ENCODE measurements at regions of chr1 and their contacts with region 1.

Region 1: GRCh38 chr1:160768295-160768657 is 27.7 kb upstream of the LY9 start:
- DNase-seq: peak; percentile 90
- H3K4me3 Mint-ChIP-seq: peak overlapping the region; percentile 70
- H3K27ac Mint-ChIP-seq: peak overlapping the region; percentile 86
- H3K4me1 Mint-ChIP-seq: peaks cover 26% of the 10 kb centered on the region
- H3K27me3 Mint-ChIP-seq: peaks cover 4% of the 10 kb centered on the region

Region 2: GRCh38 chr1:160675641-160676410 is 92.5 kb before region 1 on chr1:
- CTCF ChIA-PET with region 1: interaction called, 108 read pairs
- POLR2A ChIA-PET with region 1: interaction called, 13 read pairs
- DNase-seq: peak; percentile 82
- H3K4me3 Mint-ChIP-seq: peak overlapping the region; percentile 53
- H3K27ac Mint-ChIP-seq: peak overlapping the region; percentile 61
- H3K4me1 Mint-ChIP-seq: peaks cover 33% of the 10 kb centered on the region
- H3K27me3 Mint-ChIP-seq: no peaks in the 10 kb centered on the region

Region 3: DNA sequence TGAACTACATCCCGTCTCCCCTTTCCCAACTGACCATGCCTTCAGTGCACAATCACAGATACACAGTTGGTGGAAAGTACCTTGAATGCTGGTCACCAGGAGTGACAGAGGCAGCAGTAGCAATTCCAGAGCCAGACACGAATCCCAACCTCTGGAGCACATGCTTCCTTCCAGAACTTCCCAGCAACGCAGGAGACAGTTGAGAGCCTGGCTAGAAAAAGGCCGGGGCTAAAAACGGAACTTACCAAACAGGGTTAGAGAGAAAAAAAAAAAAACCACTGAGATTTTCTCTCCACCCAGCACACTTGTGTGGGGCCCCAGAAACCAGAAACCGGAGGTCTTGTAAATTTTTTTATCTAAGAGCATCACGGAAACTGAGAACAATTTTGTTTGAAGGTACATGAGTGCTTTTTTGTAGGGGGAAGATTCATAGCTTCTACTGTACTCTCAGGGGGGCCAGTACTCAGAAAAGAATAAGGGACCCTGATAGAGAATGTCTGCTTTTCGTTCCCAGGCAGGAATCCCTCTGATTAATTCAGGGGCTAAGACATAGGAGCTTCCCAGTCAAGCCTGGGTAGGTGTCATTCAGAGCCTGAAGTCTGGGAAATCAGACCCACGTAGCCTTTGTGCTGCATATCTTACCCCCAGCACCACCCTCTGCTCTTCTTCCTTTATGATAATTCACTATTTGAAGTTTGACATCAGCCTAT is 56.5 kb before region 1 on chr1 and contains the start of gene CD48:
- CTCF ChIA-PET with region 1: interaction called, 24 read pairs
- POLR2A ChIA-PET with region 1: interaction called, 16 read pairs
- DNase-seq: peak; percentile 61
- H3K4me3 Mint-ChIP-seq: no peak within 1 kb of the TSS
- H3K27ac Mint-ChIP-seq: no peak within 1 kb of the TSS
- H3K4me1 Mint-ChIP-seq: peaks cover 20% of the 10 kb centered on the region
- H3K27me3 Mint-ChIP-seq: no peaks in the 10 kb centered on the region
- total RNA-seq, gene CD48: 403 to 404 TPM

Region 4: GRCh38 chr1:160744199-160744851 is 24.0 kb before region 1 on chr1:
- CTCF ChIA-PET with region 1: interaction called, 13 read pairs
- POLR2A ChIA-PET with region 1: interaction called, 9 read pairs
- DNase-seq: no peak
- H3K4me3 Mint-ChIP-seq: peak overlapping the region; percentile 36
- H3K27ac Mint-ChIP-seq: peak overlapping the region; percentile 75
- H3K4me1 Mint-ChIP-seq: peaks cover 64% of the 10 kb centered on the region
- H3K27me3 Mint-ChIP-seq: no peaks in the 10 kb centered on the region

Region 5: DNA sequence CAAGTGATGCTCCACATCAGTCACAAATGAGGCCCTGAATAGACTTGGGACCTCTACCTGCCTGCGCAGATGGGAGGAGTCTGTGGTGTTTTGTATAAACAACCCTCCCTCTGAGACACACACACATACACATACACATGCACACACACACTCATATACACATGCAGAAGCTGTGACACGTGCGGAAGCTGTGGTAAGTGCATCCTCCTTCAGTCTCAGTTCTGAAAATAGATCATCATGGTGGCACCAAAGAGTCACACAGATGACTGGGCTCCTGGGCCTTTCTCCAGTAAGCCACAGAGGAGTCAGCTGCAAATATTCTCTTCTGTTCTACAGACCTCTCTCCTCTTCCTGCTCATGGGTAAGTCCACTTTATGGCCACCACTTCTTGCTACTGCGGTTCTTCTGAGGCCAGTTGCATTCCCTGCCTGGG is 27.7 kb after region 1 on chr1 and contains the start of gene LY9:
- CTCF ChIA-PET with region 1: interaction called, 7 read pairs
- POLR2A ChIA-PET with region 1: interaction called, 15 read pairs
- DNase-seq: peak; percentile 88
- H3K4me3 Mint-ChIP-seq: peak within 1 kb of the TSS; percentile 91
- H3K27ac Mint-ChIP-seq: peak within 1 kb of the TSS; percentile 96
- H3K4me1 Mint-ChIP-seq: peaks cover 66% of the 10 kb centered on the region
- H3K27me3 Mint-ChIP-seq: peaks cover 3% of the 10 kb centered on the region
- total RNA-seq, gene LY9: 46.4 to 49.9 TPM

Region 6: GRCh38 chr1:160951443-160952128 is 183.3 kb after region 1 on chr1:
- CTCF ChIA-PET with region 1: interaction called, 11 read pairs
- POLR2A ChIA-PET with region 1: no interaction called
- DNase-seq: peak; percentile 81
- H3K4me3 Mint-ChIP-seq: no peak overlapping the region
- H3K27ac Mint-ChIP-seq: no peak overlapping the region
- H3K4me1 Mint-ChIP-seq: peaks cover 7% of the 10 kb centered on the region
- H3K27me3 Mint-ChIP-seq: no peaks in the 10 kb centered on the region